Heart left ventricle (tissue), 16 donors: ENCODE measurements at regions of chr1 and their contacts with region 1.

Region 1: DNA sequence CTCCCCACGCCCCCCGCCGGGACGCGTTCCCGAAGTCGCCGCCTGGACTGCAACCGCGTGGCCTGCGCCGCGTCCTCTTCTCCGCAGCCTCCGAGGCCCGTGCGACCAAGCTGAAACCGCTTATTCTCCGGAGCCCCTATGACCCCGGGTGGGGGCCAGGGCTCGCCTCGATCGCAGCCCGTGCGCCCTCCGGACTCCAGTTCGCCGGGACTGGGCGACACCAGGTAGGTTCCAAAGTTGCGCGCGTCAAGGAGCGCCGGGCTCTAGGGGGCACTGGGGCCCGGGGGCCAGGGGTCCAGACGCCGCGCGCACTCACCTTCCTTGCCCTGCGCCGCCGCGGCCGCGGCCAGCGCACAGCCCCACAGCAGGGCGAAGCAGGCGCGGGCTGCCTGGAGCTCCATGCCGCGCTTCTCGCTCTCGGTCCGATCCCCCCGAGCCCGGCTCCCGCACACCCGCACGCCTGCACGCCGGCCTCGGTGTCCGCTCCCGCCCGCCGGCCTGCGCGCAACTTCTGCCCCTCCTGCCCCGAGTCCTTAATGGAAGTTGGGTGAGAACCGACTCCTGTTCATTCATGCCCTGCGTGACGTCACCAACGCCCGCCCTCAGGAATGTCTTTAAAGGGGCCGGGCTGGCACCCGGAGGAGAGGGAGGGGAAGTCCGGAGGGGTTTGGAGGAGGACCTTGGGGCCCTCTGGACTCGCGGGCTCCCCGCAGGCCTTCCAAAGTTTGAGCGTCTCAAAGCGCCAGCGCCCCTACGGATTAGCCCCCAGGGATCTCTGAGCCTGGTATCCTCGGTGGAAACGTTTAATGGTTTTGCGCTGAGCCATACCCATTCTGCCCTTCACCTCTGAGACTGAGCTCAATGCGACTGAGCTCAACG is at the start of gene EPHA2:
- DNase-seq: peak; percentile 90 to 96 (median 93)
- ATAC-seq: peak; percentile 44 to 80 (median 75)
- H3K4me3 ChIP-seq: peak within 1 kb of the TSS; percentile 68 to 96 (median 88)
- H3K27ac ChIP-seq: peak within 1 kb of the TSS; percentile 85 to 96 (median 92)
- H3K4me1 ChIP-seq: peaks cover 9 to 63% (median 46%) of the 10 kb centered on the region in 12 donors
- H3K27me3 ChIP-seq: peaks cover 0 to 13% (median 0%) of the 10 kb centered on the region in 9 donors
- CTCF ChIP-seq: no peak
- POLR2A ChIP-seq: peak; percentile 81 to 99
- total RNA-seq, gene EPHA2: 7.6 to 34.7 (median 14.8) TPM

Region 2: DNA sequence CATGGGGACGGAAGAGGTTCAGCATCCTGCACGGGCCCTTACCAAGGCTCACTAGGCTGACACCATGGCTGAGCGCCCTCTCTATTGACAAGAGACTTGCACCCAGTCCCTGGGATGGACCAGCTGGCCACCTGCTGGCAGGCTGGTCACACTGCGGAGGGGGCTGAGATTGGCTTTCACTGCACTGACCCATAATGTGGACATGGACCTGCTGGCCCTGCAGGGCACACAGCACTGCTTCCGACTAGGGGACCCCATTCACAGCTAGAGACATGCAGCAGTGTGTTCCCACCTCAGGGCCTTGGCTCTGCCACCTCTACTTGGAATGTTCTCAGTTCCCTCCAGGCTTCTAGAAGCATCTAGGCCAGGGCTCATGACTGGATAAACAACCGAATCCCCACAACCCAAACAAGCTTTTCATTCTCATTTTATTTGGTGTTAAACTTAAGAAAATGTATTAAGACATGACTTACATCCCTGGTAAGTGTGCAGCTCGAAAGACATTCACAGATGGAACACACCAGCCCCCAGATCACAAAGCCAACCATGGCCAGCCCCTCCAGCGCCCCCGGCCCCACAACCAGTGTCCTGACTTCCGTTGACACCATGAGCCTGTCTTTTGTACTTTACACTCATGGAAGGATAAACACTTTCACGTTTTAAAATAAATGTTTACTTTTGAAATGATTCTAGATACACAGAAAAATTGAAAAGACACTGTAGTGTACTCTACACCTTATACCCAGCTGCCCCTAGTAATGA is 161.0 kb before region 1 on chr1:
- intact Hi-C with region 1: no loop called
- DNase-seq: peak in 4 of 5 donors; percentile 55 to 83 (median 67)
- ATAC-seq: peak; percentile 45 to 87 (median 83)
- H3K4me3 ChIP-seq: no peak overlapping the region
- H3K27ac ChIP-seq: no peak overlapping the region
- H3K4me1 ChIP-seq: no peaks in the 10 kb centered on the region
- H3K27me3 ChIP-seq: no peaks in the 10 kb centered on the region
- CTCF ChIP-seq: peak; percentile 69 to 92 (median 74)
- POLR2A ChIP-seq: no peak

Region 3: DNA sequence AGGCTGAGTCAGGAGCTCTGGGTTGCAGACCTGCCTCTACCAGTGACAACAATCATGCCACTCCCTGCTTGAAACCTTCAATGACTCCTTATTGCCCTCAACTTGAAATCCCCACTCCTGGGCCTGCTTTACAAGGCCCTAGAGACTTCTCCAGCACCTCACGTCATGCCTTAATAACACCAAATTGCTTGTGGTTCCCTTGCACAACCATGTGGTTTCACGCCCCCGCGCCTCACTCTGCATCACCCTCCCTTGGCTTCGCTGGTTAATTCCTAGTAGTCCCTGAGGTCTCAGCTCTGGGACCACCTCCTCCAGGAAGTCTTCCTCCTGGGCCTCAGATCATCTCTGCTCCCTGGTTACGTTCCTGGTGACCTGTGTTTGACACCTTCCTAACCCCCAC is 32.9 kb before region 1 on chr1:
- intact Hi-C with region 1: loop called in 1 of 10 experiments (anchors 2 kb)
- DNase-seq: peak in 1 of 5 donors; percentile 11
- ATAC-seq: no peak
- H3K4me3 ChIP-seq: no peak overlapping the region
- H3K27ac ChIP-seq: no peak overlapping the region
- H3K4me1 ChIP-seq: peaks cover 0 to 22% (median 10%) of the 10 kb centered on the region in 12 donors
- H3K27me3 ChIP-seq: no peaks in the 10 kb centered on the region
- CTCF ChIP-seq: no peak
- POLR2A ChIP-seq: no peak

Region 4: DNA sequence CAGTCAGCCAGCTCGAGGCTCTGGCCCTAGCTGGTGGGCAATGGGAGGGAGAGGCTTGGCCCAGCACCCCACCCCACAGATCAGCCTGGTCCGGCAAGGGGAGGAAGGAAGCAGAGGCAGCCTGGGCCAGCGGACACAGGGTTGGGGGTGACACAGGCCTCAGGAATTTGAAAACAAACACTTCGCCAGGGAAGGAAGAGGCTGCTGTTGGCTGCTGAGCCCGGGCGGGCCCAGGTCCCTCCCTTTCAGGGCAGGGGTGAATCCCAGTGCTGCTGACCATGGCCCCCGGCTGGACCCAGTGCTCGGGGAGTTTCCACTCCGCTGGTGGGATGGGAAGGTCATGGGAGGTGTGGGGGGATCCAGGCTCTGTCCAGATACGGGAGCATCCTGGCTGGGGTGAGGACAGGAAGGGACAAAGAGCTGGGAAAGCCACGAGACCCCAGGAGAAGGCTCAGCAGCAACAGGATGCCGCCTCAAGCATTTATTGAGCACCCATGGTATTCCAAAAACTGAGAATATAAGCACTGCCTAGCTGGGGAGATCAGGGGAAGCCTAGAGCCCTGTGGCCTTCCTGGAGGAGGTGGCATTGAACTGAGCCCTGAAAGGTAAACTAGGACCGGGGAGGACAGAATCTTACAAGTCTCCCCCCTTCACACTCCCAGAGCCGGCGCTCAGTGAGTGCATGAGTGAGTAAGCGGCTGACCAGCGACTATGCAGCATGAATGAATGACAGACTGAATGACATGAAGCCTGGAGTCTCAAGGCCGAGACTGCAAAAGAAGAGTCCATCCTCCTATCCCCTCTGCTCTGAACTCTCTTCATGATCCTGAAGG is 26.3 kb after region 1 on chr1:
- intact Hi-C with region 1: loop called in 6 of 10 experiments (anchors 2 to 5 kb)
- DNase-seq: peak; percentile 88 to 91 (median 90)
- ATAC-seq: peak; percentile 87 to 98 (median 94)
- H3K4me3 ChIP-seq: peak overlapping the region in 1 of 12 donors; percentile 22
- H3K27ac ChIP-seq: peak overlapping the region; percentile 78 to 98 (median 88)
- H3K4me1 ChIP-seq: peaks cover under 1 to 30% (median 20%) of the 10 kb centered on the region in 12 donors
- H3K27me3 ChIP-seq: no peaks in the 10 kb centered on the region
- CTCF ChIP-seq: no peak
- POLR2A ChIP-seq: peak in 1 of 2 donors; percentile 38

Region 5: GRCh38 chr1:16187748-16188401 is 32.1 kb after region 1 on chr1:
- intact Hi-C with region 1: loop called in 4 of 10 experiments (anchors 2 to 5 kb)
- DNase-seq: peak; percentile 71 to 88 (median 73)
- ATAC-seq: peak; percentile 57 to 85 (median 77)
- H3K4me3 ChIP-seq: no peak overlapping the region
- H3K27ac ChIP-seq: no peak overlapping the region
- H3K4me1 ChIP-seq: peaks cover 0 to 20% (median 4%) of the 10 kb centered on the region in 12 donors
- H3K27me3 ChIP-seq: no peaks in the 10 kb centered on the region
- CTCF ChIP-seq: peak; percentile 94 to 99 (median 97)
- POLR2A ChIP-seq: no peak